ENCODE measurements at regions of chr2 and their contacts with region 1.

Region 1: GRCh38 chr2:70190418-70191243 is at the start of gene C2orf42:
- DNase-seq: peak; percentile 83 to 98 (median 96)
- ATAC-seq: peak; percentile 84 to 85
- H3K4me3 Mint-ChIP-seq: peak within 1 kb of the TSS; percentile 88 to 99 (median 96)
- H3K27ac Mint-ChIP-seq: peak within 1 kb of the TSS; percentile 96 to 100 (median 99)
- H3K4me1 Mint-ChIP-seq: peaks cover 9 to 25% (median 21%) of the 10 kb centered on the region in 4 donors
- H3K27me3 Mint-ChIP-seq: no peaks in the 10 kb centered on the region
- polyA plus RNA-seq, gene C2orf42: 19.6 to 31.1 (median 19.9) TPM

Region 2: GRCh38 chr2:68403199-68403644 is 1787.4 kb before region 1 on chr2:
- POLR2A ChIA-PET with region 1: no interaction called
- DNase-seq: no peak
- ATAC-seq: no peak
- H3K4me3 Mint-ChIP-seq: peak overlapping the region in 1 of 10 donors; percentile 40
- H3K27ac Mint-ChIP-seq: peak overlapping the region in 2 of 10 donors; percentile 59 to 78
- H3K4me1 Mint-ChIP-seq: peaks cover 0 to 64% (median 3%) of the 10 kb centered on the region in 4 donors
- H3K27me3 Mint-ChIP-seq: peaks cover 5 to 25% (median 13%) of the 10 kb centered on the region in 5 donors

Region 3: DNA sequence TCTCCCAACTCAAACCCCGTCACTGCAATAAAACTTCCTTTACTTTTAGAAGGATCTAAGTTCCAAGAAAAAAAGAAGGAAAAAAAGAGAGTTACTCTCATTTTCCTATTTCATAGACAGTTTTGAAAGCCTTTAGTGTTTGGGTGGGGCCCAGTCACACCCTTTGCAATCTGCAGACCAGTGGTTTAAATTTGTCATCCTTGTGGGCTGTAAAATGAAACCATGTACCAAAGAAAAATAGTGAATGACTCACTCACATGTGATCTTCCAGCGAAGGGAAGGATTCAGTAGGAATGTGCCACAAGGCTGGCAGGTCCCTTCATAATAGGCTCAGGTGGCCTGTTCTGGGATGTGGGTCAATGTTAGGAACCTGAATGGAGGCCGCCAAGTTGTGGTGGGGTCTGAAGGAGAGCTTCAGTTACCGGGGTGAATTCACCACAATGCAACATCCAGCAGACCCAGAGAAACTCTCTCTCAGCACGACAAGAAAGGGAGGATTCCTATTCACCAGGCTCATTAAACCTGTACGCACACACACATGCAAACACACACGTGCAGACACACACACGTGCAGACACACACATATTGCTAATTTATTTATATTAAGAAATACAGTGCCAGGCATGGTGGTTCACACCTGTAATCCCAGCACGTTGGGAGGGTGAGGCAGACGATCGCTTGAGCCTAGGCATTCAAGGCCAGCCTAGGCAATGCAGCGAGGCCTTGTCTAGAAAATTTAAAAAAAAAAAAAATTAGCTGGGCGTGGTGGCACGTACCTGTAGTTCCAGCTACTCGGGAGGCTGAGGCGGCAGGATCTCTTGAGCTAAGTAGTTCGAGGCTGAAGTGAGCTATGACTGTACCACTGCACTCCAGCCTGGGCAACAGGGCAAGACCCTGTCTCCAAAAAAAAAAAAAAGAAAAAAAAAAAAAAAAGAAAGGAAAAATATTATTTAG is 420.2 kb before region 1 on chr2:
- POLR2A ChIA-PET with region 1: no interaction called
- DNase-seq: peak in 1 of 10 donors; percentile 6
- ATAC-seq: no peak
- H3K4me3 Mint-ChIP-seq: peak overlapping the region in 2 of 10 donors; percentile 4 to 68
- H3K27ac Mint-ChIP-seq: peak overlapping the region in 3 of 10 donors; percentile 44 to 78 (median 75)
- H3K4me1 Mint-ChIP-seq: peaks cover 18 to 78% (median 27%) of the 10 kb centered on the region in 4 donors
- H3K27me3 Mint-ChIP-seq: no peaks in the 10 kb centered on the region

Region 4: DNA sequence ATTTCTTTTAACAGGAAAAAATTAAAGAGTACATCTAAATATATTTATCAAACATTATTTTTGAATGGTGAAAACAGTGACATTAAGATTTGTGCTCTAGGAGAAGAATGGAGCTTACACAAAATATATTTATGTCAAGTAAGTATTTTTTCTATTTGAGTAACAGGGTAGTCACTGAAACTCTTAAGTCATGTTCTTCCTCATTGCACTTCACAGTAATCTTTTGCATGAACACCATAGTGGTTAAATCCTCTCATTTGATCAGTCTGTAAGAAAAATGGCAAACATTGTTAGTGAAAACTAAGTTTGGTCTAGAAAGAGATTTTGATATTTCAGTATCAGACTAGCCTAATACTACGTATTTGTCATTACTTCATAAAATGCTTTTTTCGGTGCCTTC is 353.1 kb before region 1 on chr2:
- POLR2A ChIA-PET with region 1: no interaction called
- DNase-seq: no peak
- ATAC-seq: no peak
- H3K4me3 Mint-ChIP-seq: no peak overlapping the region
- H3K27ac Mint-ChIP-seq: peak overlapping the region in 1 of 10 donors; percentile 11
- H3K4me1 Mint-ChIP-seq: peaks cover 30 to 42% (median 40%) of the 10 kb centered on the region in 4 donors
- H3K27me3 Mint-ChIP-seq: no peaks in the 10 kb centered on the region

Region 5: DNA sequence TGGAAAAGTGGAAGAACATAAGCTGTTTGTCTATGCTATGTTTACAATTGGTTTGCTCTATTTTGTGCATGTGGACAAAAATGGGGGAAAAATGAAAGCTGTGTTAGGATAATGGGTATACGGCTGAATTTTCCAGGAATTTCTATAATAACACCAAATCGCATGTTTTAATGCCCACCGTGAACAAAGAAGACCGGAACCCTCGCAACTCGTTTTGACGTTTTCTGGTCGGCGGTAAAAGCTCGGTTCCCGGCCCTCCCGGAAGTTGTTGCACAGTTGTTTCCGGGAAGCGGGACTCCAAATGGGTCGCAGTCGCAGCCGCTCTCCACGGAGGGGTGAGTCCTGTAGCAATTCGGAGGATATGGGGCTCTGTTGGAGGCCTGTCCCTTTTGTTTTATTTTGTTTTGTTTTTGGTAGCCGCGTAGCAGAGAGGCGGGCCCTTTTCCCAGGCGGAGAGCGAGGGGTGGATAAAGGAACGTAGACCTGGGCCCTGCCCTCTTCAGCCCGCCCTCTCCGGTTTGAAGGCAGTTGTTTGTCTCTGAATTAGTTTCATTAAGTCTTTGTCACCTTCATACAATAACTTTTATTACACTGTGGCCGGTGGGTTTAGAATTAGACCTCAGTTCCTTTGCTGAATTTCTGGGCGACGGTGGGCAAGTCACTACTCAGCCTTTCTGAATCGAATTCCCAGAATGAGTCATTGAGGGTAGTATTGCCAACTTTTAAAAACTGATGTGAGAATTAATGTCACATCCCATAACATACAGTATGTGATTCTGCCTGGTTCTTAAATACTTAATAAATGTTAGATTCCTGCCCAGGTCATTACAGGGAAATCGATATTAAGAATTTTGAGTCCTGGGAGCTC is 296.7 kb before region 1 on chr2 and contains the start of gene SNRNP27:
- POLR2A ChIA-PET with region 1: interaction called, 13 read pairs
- DNase-seq: peak; percentile 63 to 89 (median 81)
- ATAC-seq: peak; percentile 91 to 97
- H3K4me3 Mint-ChIP-seq: peak within 1 kb of the TSS; percentile 96 to 100 (median 99)
- H3K27ac Mint-ChIP-seq: peak within 1 kb of the TSS; percentile 96 to 100 (median 99)
- H3K4me1 Mint-ChIP-seq: peaks cover 16 to 48% (median 38%) of the 10 kb centered on the region in 4 donors
- H3K27me3 Mint-ChIP-seq: no peaks in the 10 kb centered on the region
- polyA plus RNA-seq, gene SNRNP27: 38.6 to 60.9 (median 50.9) TPM

Region 6: DNA sequence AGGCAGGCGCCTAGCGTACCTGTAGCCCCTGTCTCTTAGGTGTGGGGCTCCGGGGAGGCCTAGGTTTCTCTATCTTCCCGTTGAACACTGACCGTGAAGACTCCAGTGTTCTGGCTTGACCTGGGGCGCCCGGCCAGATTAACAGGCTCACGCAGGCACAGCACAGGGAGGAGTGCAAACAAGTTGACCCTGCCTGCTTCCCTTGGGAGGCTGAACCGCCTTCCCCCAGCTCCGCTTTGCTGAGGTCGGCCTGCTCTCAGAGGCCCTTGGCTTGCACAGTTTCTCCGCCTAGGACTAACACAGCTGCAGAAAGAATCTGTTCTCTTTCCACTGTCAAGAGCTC is 67.9 kb after region 1 on chr2:
- POLR2A ChIA-PET with region 1: interaction called, 30 read pairs
- DNase-seq: no peak
- ATAC-seq: no peak
- H3K4me3 Mint-ChIP-seq: peak overlapping the region; percentile 81 to 97 (median 90)
- H3K27ac Mint-ChIP-seq: peak overlapping the region; percentile 42 to 95 (median 84)
- H3K4me1 Mint-ChIP-seq: peaks cover 15 to 51% (median 38%) of the 10 kb centered on the region in 4 donors
- H3K27me3 Mint-ChIP-seq: no peaks in the 10 kb centered on the region

Region 7: GRCh38 chr2:70301344-70302194 is 110.9 kb after region 1 on chr2 and contains the start of gene FAM136A:
- POLR2A ChIA-PET with region 1: interaction called, 10 read pairs
- DNase-seq: peak; percentile 81 to 95 (median 90)
- ATAC-seq: peak; percentile 90 to 91
- H3K4me3 Mint-ChIP-seq: peak within 1 kb of the TSS; percentile 85 to 93 (median 90)
- H3K27ac Mint-ChIP-seq: peak within 1 kb of the TSS; percentile 22 to 96 (median 93)
- H3K4me1 Mint-ChIP-seq: peaks cover 20 to 31% (median 24%) of the 10 kb centered on the region in 4 donors
- H3K27me3 Mint-ChIP-seq: no peaks in the 10 kb centered on the region
- polyA plus RNA-seq, gene FAM136A: 43.2 to 45.3 (median 44.4) TPM

Measured in naive thymus-derived CD8-positive, alpha-beta T cell (primary cell).